ENCODE measurements at regions of chr17 and their contacts with region 1.

Region 1: GRCh38 chr17:8954339-8954738 is 11.2 kb downstream of the PIK3R5 start:
- DNase-seq: peak; percentile 86
- H3K4me3 Mint-ChIP-seq: peak overlapping the region; percentile 54
- H3K27ac Mint-ChIP-seq: peak overlapping the region; percentile 82
- H3K4me1 Mint-ChIP-seq: peaks cover 96% of the 10 kb centered on the region
- H3K27me3 Mint-ChIP-seq: no peaks in the 10 kb centered on the region

Region 2: DNA sequence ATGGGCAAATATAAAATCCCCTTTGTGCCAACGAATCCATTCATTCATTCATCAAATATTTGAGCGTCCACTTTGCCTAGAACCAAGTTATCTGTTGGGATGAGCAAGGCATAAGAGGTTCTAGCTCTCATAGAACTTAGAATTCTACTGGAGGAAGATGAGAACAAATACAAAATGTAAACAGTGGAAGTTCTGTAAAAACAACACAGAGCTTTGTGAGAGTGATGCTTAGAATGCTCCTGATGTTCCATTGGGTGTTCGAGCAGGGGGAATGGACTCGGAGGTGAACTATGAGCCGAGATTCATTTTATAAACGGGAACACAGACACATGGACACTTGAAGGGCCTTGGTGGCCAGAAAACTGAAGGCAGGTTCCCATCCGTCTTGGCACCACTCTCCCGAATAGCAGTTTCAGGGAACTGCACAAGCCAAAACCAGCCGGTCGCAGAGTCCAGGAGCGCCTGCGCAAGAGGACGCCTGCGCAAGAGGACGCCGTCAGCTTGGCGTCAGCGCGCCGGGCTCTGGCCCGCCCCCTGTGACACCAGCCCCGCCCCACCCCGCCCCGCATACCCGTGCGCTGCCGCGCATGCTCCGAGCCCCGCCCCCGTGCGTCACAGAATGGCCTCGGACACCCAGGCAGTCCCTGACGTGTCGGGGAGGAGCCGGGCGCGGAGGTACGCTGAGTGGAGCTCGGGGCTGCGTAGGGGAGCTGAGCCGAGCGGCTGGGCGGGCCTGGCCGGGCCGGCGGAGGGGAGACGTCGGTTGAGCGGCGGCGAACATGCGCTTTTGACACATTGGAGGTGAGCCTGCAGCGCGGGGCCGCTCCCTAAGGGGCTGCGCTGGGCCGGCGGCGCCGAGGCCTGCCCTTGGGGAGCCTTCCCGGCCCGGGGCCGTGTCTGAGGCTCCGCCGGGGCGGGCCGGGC is 518.8 kb before region 1 on chr17 and contains the start of gene NDEL1:
- CTCF ChIA-PET with region 1: no interaction called
- POLR2A ChIA-PET with region 1: no interaction called
- intact Hi-C with region 1: loop called (anchors 5 kb)
- DNase-seq: peak; percentile 99
- H3K4me3 Mint-ChIP-seq: peak within 1 kb of the TSS; percentile 92
- H3K27ac Mint-ChIP-seq: peak within 1 kb of the TSS; percentile 91
- H3K4me1 Mint-ChIP-seq: peaks cover 31% of the 10 kb centered on the region
- H3K27me3 Mint-ChIP-seq: no peaks in the 10 kb centered on the region
- total RNA-seq, gene NDEL1: 58.0 to 62.8 TPM

Region 3: GRCh38 chr17:8857919-8858318 is 96.4 kb before region 1 on chr17:
- CTCF ChIA-PET with region 1: no interaction called
- POLR2A ChIA-PET with region 1: no interaction called
- intact Hi-C with region 1: loop called (anchors 5 kb)
- DNase-seq: peak; percentile 82
- H3K4me3 Mint-ChIP-seq: no peak overlapping the region
- H3K27ac Mint-ChIP-seq: no peak overlapping the region
- H3K4me1 Mint-ChIP-seq: peaks cover 46% of the 10 kb centered on the region
- H3K27me3 Mint-ChIP-seq: no peaks in the 10 kb centered on the region

Region 4: DNA sequence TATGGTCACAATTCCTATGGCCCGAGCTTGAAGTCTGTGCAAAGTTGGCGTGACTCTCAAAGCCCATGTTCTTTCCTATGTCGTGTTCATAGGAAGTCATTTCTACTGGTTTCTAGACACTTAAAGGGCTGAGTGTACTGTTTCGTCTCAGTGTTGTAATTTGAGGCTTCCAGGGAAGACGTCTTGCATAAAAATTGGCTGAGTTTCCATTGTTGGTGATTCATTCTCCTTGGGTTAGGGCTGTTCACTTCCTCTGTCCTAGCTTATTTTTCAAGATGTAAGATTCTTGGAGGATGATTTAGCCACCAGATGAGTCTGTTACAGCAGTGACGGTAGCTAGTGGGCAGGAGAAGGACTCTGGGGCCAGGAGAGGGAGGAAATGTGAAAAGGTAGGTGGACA is 31.9 kb before region 1 on chr17:
- CTCF ChIA-PET with region 1: no interaction called
- POLR2A ChIA-PET with region 1: interaction called, 3 read pairs
- intact Hi-C with region 1: loop called (anchors 5 kb)
- DNase-seq: no peak
- H3K4me3 Mint-ChIP-seq: no peak overlapping the region
- H3K27ac Mint-ChIP-seq: peak overlapping the region; percentile 79
- H3K4me1 Mint-ChIP-seq: peaks cover 33% of the 10 kb centered on the region
- H3K27me3 Mint-ChIP-seq: no peaks in the 10 kb centered on the region

Region 5: DNA sequence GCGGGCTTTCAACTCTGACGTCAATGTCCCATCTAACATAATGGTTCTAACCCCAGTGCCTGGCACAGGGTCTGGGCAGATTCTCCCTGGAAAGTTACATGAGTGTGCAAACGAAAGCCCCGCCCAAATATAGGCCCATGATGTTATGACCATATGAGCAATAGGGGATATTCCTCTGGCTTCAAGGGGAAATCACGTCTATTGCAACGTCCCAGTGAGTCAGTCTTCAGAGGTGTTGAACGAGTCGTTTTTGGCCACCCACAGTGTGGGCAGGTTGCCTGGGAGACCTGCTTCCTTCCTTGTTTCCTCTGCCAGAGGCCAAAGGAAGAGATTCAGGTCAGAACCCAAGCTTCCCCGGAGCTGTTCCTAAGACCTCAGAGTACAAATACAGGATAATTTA is 19.1 kb before region 1 on chr17:
- CTCF ChIA-PET with region 1: interaction called, 8 read pairs
- POLR2A ChIA-PET with region 1: interaction called, 13 read pairs
- intact Hi-C with region 1: loop called (anchors 1 kb)
- DNase-seq: peak; percentile 92
- H3K4me3 Mint-ChIP-seq: peak overlapping the region; percentile 14
- H3K27ac Mint-ChIP-seq: peak overlapping the region; percentile 88
- H3K4me1 Mint-ChIP-seq: peaks cover 72% of the 10 kb centered on the region
- H3K27me3 Mint-ChIP-seq: no peaks in the 10 kb centered on the region

Region 6: GRCh38 chr17:8941520-8941919 is 12.8 kb before region 1 on chr17:
- CTCF ChIA-PET with region 1: interaction called, 8 read pairs
- POLR2A ChIA-PET with region 1: interaction called, 13 read pairs
- intact Hi-C with region 1: loop called (anchors 1 kb)
- DNase-seq: peak; percentile 85
- H3K4me3 Mint-ChIP-seq: peak overlapping the region; percentile 47
- H3K27ac Mint-ChIP-seq: peak overlapping the region; percentile 89
- H3K4me1 Mint-ChIP-seq: peaks cover 69% of the 10 kb centered on the region
- H3K27me3 Mint-ChIP-seq: no peaks in the 10 kb centered on the region

Region 7: DNA sequence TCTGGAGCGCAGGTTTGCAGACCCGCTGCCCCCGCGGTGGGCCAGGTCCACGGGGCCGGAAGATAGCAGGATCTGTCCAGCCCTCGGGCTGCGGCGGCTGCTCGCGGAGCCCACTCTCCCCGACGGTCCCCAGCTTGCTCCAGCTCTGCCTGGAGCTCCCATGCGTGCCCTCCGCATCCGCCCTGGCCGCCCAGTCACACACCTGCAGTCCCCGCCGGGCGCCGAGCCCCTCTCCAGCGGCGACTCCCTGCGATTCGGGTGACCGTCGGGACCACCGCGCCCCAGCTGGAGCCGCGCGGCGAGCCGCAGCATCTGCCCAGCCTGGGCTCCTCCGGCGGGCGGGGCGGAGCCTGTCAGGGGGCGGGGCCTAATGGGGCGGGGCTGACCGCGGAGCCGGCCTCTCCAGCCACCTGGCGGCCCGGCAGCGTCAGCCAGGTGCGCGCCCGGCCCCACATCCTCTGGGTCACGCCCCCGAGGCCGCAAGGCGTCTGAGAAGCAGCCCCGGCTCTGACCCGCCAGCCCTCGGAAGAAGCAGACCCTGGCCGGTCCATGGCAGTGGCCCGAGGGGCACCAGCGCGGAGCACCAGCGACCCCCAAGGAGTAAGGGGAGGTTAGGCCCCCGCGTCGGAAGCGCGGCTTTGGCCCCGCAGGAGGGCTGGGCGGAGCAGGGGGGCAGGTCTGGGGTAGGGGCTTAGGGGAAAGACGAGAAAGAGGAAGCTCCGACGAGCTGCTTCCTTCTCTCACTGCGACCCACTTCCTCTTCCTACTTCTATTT is 11.2 kb after region 1 on chr17 and contains the start of gene PIK3R5:
- CTCF ChIA-PET with region 1: interaction called, 5 read pairs
- POLR2A ChIA-PET with region 1: interaction called, 14 read pairs
- intact Hi-C with region 1: loop called (anchors 1 kb)
- DNase-seq: peak; percentile 90
- H3K4me3 Mint-ChIP-seq: peak within 1 kb of the TSS; percentile 88
- H3K27ac Mint-ChIP-seq: peak within 1 kb of the TSS; percentile 80
- H3K4me1 Mint-ChIP-seq: peaks cover 48% of the 10 kb centered on the region
- H3K27me3 Mint-ChIP-seq: no peaks in the 10 kb centered on the region
- total RNA-seq, gene PIK3R5: 20.7 to 22.4 TPM

Region 8: GRCh38 chr17:9057310-9057709 is 103.0 kb after region 1 on chr17:
- CTCF ChIA-PET with region 1: no interaction called
- POLR2A ChIA-PET with region 1: no interaction called
- intact Hi-C with region 1: no loop called
- DNase-seq: no peak
- H3K4me3 Mint-ChIP-seq: no peak overlapping the region
- H3K27ac Mint-ChIP-seq: no peak overlapping the region
- H3K4me1 Mint-ChIP-seq: no peaks in the 10 kb centered on the region
- H3K27me3 Mint-ChIP-seq: peaks cover 8% of the 10 kb centered on the region

Region 9: GRCh38 chr17:9900784-9901183 is 946.4 kb after region 1 on chr17:
- CTCF ChIA-PET with region 1: no interaction called
- POLR2A ChIA-PET with region 1: no interaction called
- intact Hi-C with region 1: no loop called
- DNase-seq: no peak
- H3K4me3 Mint-ChIP-seq: no peak overlapping the region
- H3K27ac Mint-ChIP-seq: no peak overlapping the region
- H3K4me1 Mint-ChIP-seq: no peaks in the 10 kb centered on the region
- H3K27me3 Mint-ChIP-seq: peaks cover 5% of the 10 kb centered on the region

Measured in activated CD4-positive, alpha-beta memory T cell treated with anti-CD3 and anti-CD28 coated beads for 36 hours (primary cell).